ENCODE measurements at regions of chr2 and their contacts with region 1.

Region 1: GRCh38 chr2:36355151-36355889 is at the start of gene CRIM1:
- DNase-seq: peak; percentile 90 to 93
- ATAC-seq: peak; percentile 69 to 93 (median 80)
- H3K4me3 ChIP-seq: peak within 1 kb of the TSS; percentile 56 to 95 (median 89)
- H3K27ac ChIP-seq: peak within 1 kb of the TSS; percentile 81 to 93 (median 91)
- H3K4me1 ChIP-seq: peaks cover 8 to 54% (median 44%) of the 10 kb centered on the region in 9 donors
- H3K27me3 ChIP-seq: peaks cover 0 to 34% (median 0%) of the 10 kb centered on the region in 7 donors
- CTCF ChIP-seq: no peak
- total RNA-seq, gene CRIM1: 35.1 to 83.6 (median 66.5) TPM

Region 2: DNA sequence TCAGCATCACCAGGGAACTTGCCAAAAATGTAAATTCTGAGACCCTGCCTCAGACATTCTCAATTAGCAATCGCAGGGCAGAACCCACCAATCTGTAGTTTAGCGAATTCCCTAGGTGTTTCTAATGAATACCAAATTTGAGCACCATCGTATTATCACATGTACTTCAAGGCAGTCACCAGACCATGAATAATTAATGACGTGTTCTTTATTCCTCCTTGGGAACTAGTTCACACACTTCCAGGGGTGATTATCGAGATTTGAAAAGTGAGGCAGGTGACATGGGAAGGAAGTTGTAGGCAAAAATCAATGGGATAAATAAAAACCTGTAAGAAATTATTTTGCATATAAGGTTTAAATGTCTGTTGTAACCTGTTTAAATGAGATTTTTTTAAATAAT is 102.2 kb before region 1 on chr2:
- intact Hi-C with region 1: no loop called
- DNase-seq: no peak
- ATAC-seq: no peak
- H3K4me3 ChIP-seq: no peak overlapping the region
- H3K27ac ChIP-seq: no peak overlapping the region
- H3K4me1 ChIP-seq: no peaks in the 10 kb centered on the region
- H3K27me3 ChIP-seq: peaks cover 0 to 8% (median 0%) of the 10 kb centered on the region in 7 donors
- CTCF ChIP-seq: no peak

Region 3: DNA sequence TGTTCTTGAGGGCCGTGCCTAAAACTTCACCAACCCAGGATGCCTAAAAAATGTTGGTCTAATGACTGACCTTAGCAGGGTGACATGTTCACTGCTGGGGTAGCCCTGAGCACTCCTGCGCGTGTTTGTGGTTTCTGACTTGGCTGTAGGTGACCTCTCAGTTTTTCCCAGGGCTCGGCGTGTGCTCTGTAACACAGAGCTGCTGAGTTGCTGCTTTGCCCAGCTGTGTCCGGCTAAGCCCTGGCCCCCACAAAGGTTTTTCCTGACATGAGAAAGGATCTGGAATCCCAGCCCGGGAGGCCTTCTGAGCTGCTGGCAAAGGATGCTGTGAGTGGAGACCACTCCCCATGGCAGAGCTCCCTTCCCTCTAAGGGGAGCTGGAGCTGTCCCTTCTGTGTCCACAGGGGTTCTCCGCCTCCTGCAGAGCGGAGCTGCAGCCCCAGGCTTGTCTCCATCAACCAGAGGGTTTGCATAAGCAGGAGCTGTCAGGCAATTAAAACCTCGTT is 52.9 kb after region 1 on chr2:
- intact Hi-C with region 1: loop called in 3 of 10 experiments (anchors 5 kb)
- DNase-seq: peak in 1 of 2 donors; percentile 19
- ATAC-seq: peak; percentile 49 to 79 (median 66)
- H3K4me3 ChIP-seq: peak overlapping the region in 3 of 10 donors; percentile 4 to 14 (median 5)
- H3K27ac ChIP-seq: peak overlapping the region; percentile 0 to 80 (median 47)
- H3K4me1 ChIP-seq: peaks cover 24 to 100% (median 66%) of the 10 kb centered on the region in 9 donors
- H3K27me3 ChIP-seq: no peaks in the 10 kb centered on the region
- CTCF ChIP-seq: no peak

Region 4: GRCh38 chr2:36433311-36434217 is 78.2 kb after region 1 on chr2:
- intact Hi-C with region 1: loop called in 1 of 10 experiments (anchors 5 kb)
- DNase-seq: peak; percentile 35 to 61
- ATAC-seq: peak in 7 of 8 donors; percentile 37 to 77 (median 57)
- H3K4me3 ChIP-seq: no peak overlapping the region
- H3K27ac ChIP-seq: peak overlapping the region in 9 of 10 donors; percentile 18 to 80 (median 58)
- H3K4me1 ChIP-seq: peaks cover 18 to 80% (median 51%) of the 10 kb centered on the region in 9 donors
- H3K27me3 ChIP-seq: no peaks in the 10 kb centered on the region
- CTCF ChIP-seq: no peak

Region 5: GRCh38 chr2:36507408-36507812 is 152.1 kb after region 1 on chr2:
- intact Hi-C with region 1: loop called (anchors 1 to 5 kb)
- DNase-seq: peak in 1 of 2 donors; percentile 58
- ATAC-seq: peak; percentile 85 to 96 (median 94)
- H3K4me3 ChIP-seq: no peak overlapping the region
- H3K27ac ChIP-seq: no peak overlapping the region
- H3K4me1 ChIP-seq: no peaks in the 10 kb centered on the region
- H3K27me3 ChIP-seq: no peaks in the 10 kb centered on the region
- CTCF ChIP-seq: peak; percentile 54 to 92 (median 83)

Region 6: DNA sequence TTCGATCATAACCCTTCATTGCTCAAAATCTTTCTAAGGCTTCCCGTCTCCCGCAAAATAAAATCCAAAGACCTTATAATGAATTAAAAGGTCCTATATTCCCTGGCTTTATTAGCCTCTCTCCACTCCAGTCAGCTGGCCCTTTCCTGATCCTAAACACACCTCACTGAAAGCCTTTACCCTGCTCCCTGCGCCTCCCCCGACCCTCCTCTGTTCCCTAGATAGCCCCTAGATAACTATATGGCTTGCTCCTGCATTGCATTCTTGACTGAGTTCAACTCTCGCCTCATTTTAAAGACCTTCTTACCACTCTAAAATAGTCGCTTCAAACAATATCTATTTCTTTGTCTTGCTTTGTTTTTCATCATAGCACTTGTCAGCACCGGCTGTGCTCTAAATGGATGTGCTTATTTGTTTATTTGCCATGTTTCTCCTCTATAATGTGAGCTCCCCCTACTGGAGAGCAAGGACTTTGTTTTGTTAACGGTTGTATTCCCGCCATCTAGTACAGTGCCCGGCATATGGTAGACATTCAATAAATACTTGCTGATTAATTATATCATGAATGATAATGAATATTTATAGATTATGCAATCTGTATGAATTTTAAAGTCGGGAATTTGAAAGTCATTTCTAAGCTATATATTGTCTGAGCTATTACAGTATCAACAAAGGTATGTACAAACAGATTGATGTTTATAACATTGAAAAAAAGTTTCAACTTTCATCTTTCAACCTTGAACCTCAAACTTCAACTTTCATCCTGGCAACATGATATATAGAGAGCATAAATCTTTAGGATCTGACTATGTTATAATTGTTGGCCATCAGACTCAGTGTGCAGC is 308.8 kb after region 1 on chr2:
- intact Hi-C with region 1: loop called in 9 of 10 experiments (anchors 1 to 5 kb)
- DNase-seq: peak in 1 of 2 donors; percentile 21
- ATAC-seq: peak in 7 of 8 donors; percentile 73 to 94 (median 87)
- H3K4me3 ChIP-seq: no peak overlapping the region
- H3K27ac ChIP-seq: no peak overlapping the region
- H3K4me1 ChIP-seq: peaks cover 0 to 8% (median 4%) of the 10 kb centered on the region in 9 donors
- H3K27me3 ChIP-seq: peaks cover 0 to 34% (median 5%) of the 10 kb centered on the region in 7 donors
- CTCF ChIP-seq: peak; percentile 69 to 88 (median 79)

Region 7: DNA sequence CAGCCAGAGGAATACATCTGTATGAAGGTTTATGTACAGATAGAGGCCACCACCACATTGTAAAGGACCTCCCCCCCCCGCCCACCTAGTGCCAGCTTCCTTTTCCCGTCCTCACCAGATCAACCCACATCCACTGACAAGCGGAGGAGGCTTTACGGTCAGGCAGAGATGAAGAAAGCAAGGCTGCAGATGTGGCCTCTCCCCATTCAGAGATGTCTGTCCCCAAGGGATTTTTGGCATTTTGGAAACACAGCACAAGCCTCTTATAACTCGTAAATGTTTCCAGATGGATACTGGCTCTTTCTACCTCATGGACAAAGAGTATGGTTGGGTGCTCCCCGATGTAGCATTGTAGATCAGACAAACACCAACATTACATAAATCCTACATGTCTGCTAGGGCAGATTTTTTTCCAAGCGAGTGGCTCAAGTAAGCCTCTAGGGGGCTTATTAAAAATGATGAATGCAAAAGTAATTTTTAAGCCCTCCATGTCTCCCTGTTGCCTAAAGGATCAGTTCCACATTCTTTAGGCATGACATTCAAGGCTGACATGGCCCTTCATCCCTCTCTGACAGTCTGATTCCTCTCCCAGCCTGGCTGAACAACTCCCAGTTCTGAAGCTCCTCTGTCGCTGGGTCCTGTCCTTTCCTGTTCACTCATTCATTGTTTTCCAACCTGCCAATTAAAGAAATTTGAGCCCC is 352.9 kb after region 1 on chr2:
- intact Hi-C with region 1: no loop called
- DNase-seq: no peak
- ATAC-seq: peak; percentile 41 to 72 (median 60)
- H3K4me3 ChIP-seq: no peak overlapping the region
- H3K27ac ChIP-seq: peak overlapping the region in 7 of 10 donors; percentile 22 to 69 (median 38)
- H3K4me1 ChIP-seq: peaks cover 0 to 38% (median 13%) of the 10 kb centered on the region in 9 donors
- H3K27me3 ChIP-seq: no peaks in the 10 kb centered on the region
- CTCF ChIP-seq: peak in 2 of 9 donors; percentile 11 to 16

Region 8: DNA sequence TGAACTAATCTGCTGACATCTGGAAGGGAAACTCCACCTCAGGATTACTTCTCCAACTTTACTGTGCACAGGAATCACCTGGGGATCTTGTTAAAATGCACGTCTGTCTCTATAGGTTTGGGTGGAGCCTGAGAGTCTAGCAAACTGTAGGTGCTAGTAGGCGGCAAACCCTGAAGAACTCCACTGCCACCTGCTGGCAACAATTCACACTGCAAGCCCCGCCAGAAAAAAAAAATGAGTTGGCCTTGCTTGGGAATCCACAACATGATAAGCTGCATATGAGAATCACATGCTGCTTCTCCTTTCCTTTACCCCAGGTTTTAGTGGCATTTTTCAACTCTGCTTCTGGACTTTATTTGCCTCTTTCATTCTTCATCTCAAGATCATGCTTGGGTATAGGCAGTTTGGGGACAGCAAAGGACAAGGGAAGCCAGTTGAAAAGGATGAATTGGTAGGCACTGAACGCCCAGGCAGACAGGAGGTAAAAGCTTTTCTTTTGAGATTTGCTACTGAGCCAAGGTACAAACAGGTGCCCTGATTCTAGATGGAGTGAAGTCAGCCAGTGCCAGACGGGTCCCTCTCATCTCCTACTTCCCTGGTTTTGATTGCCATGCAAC is 430.0 kb after region 1 on chr2:
- intact Hi-C with region 1: loop called in 3 of 10 experiments (anchors 5 to 10 kb)
- DNase-seq: peak; percentile 42 to 44
- ATAC-seq: peak in 6 of 8 donors; percentile 27 to 63 (median 59)
- H3K4me3 ChIP-seq: no peak overlapping the region
- H3K27ac ChIP-seq: no peak overlapping the region
- H3K4me1 ChIP-seq: peaks cover 0 to 28% (median 6%) of the 10 kb centered on the region in 9 donors
- H3K27me3 ChIP-seq: no peaks in the 10 kb centered on the region
- CTCF ChIP-seq: peak; percentile 91 to 97 (median 93)

Region 9: DNA sequence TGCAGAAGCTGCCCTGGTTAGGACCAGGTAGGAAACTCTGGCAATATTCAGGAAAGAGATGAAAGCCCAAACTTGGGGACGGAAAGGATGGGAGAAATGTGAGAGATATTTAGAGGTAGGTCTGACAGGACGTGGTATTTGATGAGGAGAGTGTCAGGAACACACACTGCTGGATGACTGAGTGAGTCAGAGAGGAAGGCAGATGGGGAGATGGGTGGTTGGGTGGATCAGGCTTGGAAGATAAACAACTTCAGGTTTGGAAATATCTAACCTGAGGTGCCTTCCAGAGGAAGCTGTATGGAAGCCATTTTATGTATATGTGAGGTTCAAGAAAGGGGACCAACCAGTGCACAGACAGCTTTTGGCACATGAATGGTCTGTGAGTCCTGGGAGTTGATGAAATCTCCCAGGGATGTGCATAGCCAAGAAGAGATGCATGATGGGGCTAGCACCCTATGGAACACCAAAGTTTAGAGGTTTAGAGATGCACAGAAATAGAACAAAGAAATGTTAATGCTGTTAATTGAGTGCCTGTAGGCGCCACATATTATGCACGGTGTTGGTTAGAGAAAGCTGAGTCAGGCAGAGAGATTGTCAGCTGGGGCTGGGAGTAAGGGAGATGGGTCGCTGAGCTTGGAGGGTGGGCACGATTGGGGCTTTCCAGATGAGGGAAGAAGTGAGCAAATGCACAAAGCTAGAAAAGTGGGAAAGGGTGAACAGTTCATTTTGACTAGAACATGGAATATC is 442.2 kb after region 1 on chr2:
- intact Hi-C with region 1: no loop called
- DNase-seq: no peak
- ATAC-seq: no peak
- H3K4me3 ChIP-seq: no peak overlapping the region
- H3K27ac ChIP-seq: no peak overlapping the region
- H3K4me1 ChIP-seq: no peaks in the 10 kb centered on the region
- H3K27me3 ChIP-seq: peaks cover 0 to 11% (median 0%) of the 10 kb centered on the region in 7 donors
- CTCF ChIP-seq: no peak

Measured in heart right ventricle (tissue), 16 donors.